Activated naive CD4-positive, alpha-beta T cell treated with anti-CD3 and anti-CD28 coated beads, Interleukin-2, amount 10 ng/mL, durations not matched to agents 7 days and 5 days (primary cell): ENCODE measurements at regions of chr12 and their contacts with region 1.

Region 1: DNA sequence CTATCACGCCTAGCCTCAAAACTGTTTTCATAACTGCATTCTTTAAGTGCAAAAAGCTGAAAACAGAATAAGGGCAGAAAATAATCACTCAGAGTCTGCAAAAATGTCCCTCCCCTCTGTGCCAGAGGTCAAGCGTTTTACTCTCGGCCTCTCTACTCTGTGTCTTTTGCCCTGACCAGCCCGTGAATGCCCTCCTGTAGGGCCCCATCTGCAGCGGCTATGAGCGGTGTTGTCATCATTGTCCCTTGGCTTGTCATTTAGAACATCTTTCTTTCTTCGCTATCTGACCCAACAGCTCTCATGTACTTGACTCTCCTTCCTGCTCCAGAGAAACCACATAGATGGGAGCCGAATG is 21.7 kb downstream of the ELK3 start:
- DNase-seq: no peak
- H3K4me3 Mint-ChIP-seq: no peak overlapping the region
- H3K27ac Mint-ChIP-seq: peak overlapping the region; percentile 70
- H3K4me1 Mint-ChIP-seq: peaks cover 50% of the 10 kb centered on the region
- H3K27me3 Mint-ChIP-seq: no peaks in the 10 kb centered on the region

Region 2: GRCh38 chr12:96107236-96107635 is 108.7 kb before region 1 on chr12:
- CTCF ChIA-PET with region 1: interaction called, 10 read pairs
- DNase-seq: no peak
- H3K4me3 Mint-ChIP-seq: no peak overlapping the region
- H3K27ac Mint-ChIP-seq: peak overlapping the region; percentile 38
- H3K4me1 Mint-ChIP-seq: peaks cover 37% of the 10 kb centered on the region
- H3K27me3 Mint-ChIP-seq: peaks cover 5% of the 10 kb centered on the region

Region 3: DNA sequence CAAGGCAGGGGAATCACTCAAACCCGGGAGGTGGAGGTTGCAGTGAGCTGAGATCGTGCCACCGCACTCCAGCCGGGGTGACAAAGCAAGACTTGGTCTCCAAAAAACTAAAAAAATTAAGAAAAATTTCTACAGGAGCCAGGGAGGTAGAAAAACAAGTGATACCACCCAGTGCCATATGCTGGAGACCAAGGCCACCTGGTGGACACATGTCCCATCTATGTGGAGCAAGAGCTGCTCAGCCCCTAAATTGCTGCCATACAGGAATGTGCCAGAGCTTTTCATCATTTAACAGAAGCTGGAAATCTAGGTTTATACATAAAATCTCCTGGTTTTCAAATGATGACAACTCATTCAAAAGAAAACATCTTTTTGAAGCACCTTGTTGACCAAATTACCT is 83.1 kb before region 1 on chr12:
- CTCF ChIA-PET with region 1: interaction called, 17 read pairs
- DNase-seq: peak; percentile 60
- H3K4me3 Mint-ChIP-seq: no peak overlapping the region
- H3K27ac Mint-ChIP-seq: no peak overlapping the region
- H3K4me1 Mint-ChIP-seq: peaks cover 17% of the 10 kb centered on the region
- H3K27me3 Mint-ChIP-seq: peaks cover 39% of the 10 kb centered on the region

Region 4: GRCh38 chr12:96150442-96150841 is 65.5 kb before region 1 on chr12:
- CTCF ChIA-PET with region 1: no interaction called
- DNase-seq: no peak
- H3K4me3 Mint-ChIP-seq: no peak overlapping the region
- H3K27ac Mint-ChIP-seq: no peak overlapping the region
- H3K4me1 Mint-ChIP-seq: no peaks in the 10 kb centered on the region
- H3K27me3 Mint-ChIP-seq: peaks cover 3% of the 10 kb centered on the region